Heart left ventricle (tissue), 16 donors: ENCODE measurements at regions of chr11 and their contacts with region 1.

Region 1: GRCh38 chr11:102216433-102217075 is 100.7 kb upstream of the BIRC3 start:
- DNase-seq: no peak
- ATAC-seq: peak in 2 of 4 donors; percentile 49 to 58
- H3K4me3 ChIP-seq: no peak overlapping the region
- H3K27ac ChIP-seq: peak overlapping the region in 8 of 12 donors; percentile 11 to 76 (median 40)
- H3K4me1 ChIP-seq: peaks cover 0 to 40% (median 20%) of the 10 kb centered on the region in 12 donors
- H3K27me3 ChIP-seq: no peaks in the 10 kb centered on the region
- CTCF ChIP-seq: no peak
- POLR2A ChIP-seq: no peak

Region 2: GRCh38 chr11:102157219-102157618 is 59.3 kb before region 1 on chr11:
- intact Hi-C with region 1: loop called in 1 of 10 experiments (anchors 10 kb)
- DNase-seq: peak in 4 of 5 donors; percentile 64 to 76 (median 71)
- ATAC-seq: peak; percentile 92 to 96 (median 94)
- H3K4me3 ChIP-seq: no peak overlapping the region
- H3K27ac ChIP-seq: peak overlapping the region in 8 of 12 donors; percentile 21 to 63 (median 50)
- H3K4me1 ChIP-seq: peaks cover 0 to 66% (median 31%) of the 10 kb centered on the region in 12 donors
- H3K27me3 ChIP-seq: no peaks in the 10 kb centered on the region
- CTCF ChIP-seq: no peak
- POLR2A ChIP-seq: no peak